ENCODE measurements at regions of chr17 and their contacts with region 1.

Region 1: GRCh38 chr17:32659419-32659842 is 172.6 kb downstream of the CDK5R1 start:
- DNase-seq: peak; percentile 55
- ATAC-seq: peak; percentile 95
- H3K4me3 ChIP-seq: no peak overlapping the region
- H3K27ac ChIP-seq: no peak overlapping the region
- H3K4me1 ChIP-seq: no peaks in the 10 kb centered on the region
- H3K27me3 ChIP-seq: no peaks in the 10 kb centered on the region; the same call in 1 of the 2 replicates
- CTCF ChIP-seq: peak; percentile 68
- POLR2A ChIP-seq: no peak
- RAD21 ChIP-seq: peak; percentile 44; the same call in 1 of the 2 replicates

Region 2: DNA sequence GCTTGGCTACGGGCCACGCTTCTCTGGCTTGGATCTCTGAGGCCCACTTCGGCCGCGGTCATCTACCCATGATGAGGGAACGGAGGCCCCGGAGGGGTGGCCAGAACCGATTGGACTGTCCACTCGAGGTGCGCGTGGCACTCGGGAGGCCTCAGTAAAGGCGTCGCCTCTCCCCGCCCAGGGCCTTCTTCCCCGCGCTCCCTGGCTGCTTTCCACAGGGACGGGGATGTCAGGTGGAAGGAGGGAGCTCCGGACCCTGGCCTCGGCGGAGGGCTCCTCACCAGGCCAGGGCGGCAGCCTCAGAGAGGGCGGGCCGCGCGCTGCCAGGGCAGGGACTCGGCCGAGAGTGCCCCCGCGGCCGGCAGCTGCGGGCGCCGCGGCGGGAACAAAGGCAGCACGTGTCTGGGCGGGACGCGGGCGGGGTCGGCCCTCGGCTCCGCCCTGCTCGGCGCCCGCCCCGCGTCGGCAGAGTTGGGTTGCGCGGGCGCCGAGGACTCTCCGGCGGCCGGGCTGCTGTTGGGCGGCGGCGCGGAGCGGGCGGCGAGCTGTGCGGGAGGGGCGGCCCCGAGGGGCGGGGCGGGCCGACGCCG is 173.2 kb before region 1 on chr17:
- CTCF ChIA-PET with region 1: interaction called, 3 read pairs
- POLR2A ChIA-PET with region 1: no interaction called
- dilution Hi-C with region 1: no loop called
- in situ Hi-C with region 1: no loop called
- intact Hi-C with region 1: loop called (anchors 5 kb)
- DNase-seq: peak; percentile 61
- ATAC-seq: peak; percentile 84
- H3K4me3 ChIP-seq: peak overlapping the region; percentile 91
- H3K27ac ChIP-seq: no peak overlapping the region; the same call in 1 of the 2 replicates
- H3K4me1 ChIP-seq: peaks cover 5% of the 10 kb centered on the region; the same call in 1 of the 2 replicates
- H3K27me3 ChIP-seq: no peaks in the 10 kb centered on the region
- CTCF ChIP-seq: no peak
- POLR2A ChIP-seq: no peak
- RAD21 ChIP-seq: no peak

Region 3: DNA sequence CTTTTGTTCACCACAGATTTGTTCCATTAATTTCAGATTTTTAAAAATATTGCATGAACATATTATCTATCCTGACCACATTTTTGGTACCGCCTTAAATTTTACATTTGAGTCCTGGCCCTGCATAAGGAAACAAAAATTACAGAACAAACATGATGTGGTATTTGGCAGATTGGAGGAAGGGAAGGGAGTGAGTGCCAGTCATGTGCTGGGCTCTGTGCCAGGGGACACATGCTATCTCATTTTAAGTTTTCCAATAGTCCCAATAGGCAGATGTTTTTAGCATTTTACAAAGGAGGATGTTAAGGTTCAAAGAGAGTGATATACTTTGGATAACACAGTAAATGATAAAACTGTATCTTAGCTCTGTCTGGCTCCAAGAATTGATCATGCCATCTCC is 12.5 kb after region 1 on chr17:
- CTCF ChIA-PET with region 1: interaction called, 17 read pairs
- POLR2A ChIA-PET with region 1: no interaction called
- dilution Hi-C with region 1: no loop called
- in situ Hi-C with region 1: no loop called
- intact Hi-C with region 1: no loop called
- DNase-seq: no peak
- ATAC-seq: no peak
- H3K4me3 ChIP-seq: no peak overlapping the region
- H3K27ac ChIP-seq: no peak overlapping the region
- H3K4me1 ChIP-seq: no peaks in the 10 kb centered on the region
- H3K27me3 ChIP-seq: no peaks in the 10 kb centered on the region; the same call in 1 of the 2 replicates
- CTCF ChIP-seq: no peak
- POLR2A ChIP-seq: no peak
- RAD21 ChIP-seq: no peak

Region 4: GRCh38 chr17:32693194-32693897 is 33.9 kb after region 1 on chr17:
- CTCF ChIA-PET with region 1: no interaction called
- POLR2A ChIA-PET with region 1: no interaction called
- dilution Hi-C with region 1: no loop called
- in situ Hi-C with region 1: no loop called
- intact Hi-C with region 1: no loop called
- DNase-seq: no peak
- ATAC-seq: no peak
- H3K4me3 ChIP-seq: no peak overlapping the region
- H3K27ac ChIP-seq: no peak overlapping the region
- H3K4me1 ChIP-seq: no peaks in the 10 kb centered on the region
- H3K27me3 ChIP-seq: no peaks in the 10 kb centered on the region
- CTCF ChIP-seq: no peak
- POLR2A ChIP-seq: no peak
- RAD21 ChIP-seq: no peak